CD4-positive, alpha-beta memory T cell (primary cell): ENCODE measurements at regions of chr1 and their contacts with region 1.

Region 1: GRCh38 chr1:151993654-151994496 is at the start of gene S100A10:
- DNase-seq: peak; percentile 83 to 87 (median 86)
- H3K4me3 ChIP-seq: peak within 1 kb of the TSS; percentile 55 to 88
- H3K4me3 Mint-ChIP-seq: peak within 1 kb of the TSS; percentile 95 to 99 (median 98)
- H3K27ac ChIP-seq: peak within 1 kb of the TSS; percentile 92
- H3K27ac Mint-ChIP-seq: peak within 1 kb of the TSS; percentile 97 to 99 (median 98)
- H3K4me1 ChIP-seq: peaks cover 54% of the 10 kb centered on the region
- H3K4me1 Mint-ChIP-seq: peaks cover 38 to 61% (median 46%) of the 10 kb centered on the region in 4 donors
- H3K27me3 ChIP-seq: no peaks in the 10 kb centered on the region
- H3K27me3 Mint-ChIP-seq: no peaks in the 10 kb centered on the region
- total RNA-seq, gene S100A10: 218 to 231 TPM

Region 2: DNA sequence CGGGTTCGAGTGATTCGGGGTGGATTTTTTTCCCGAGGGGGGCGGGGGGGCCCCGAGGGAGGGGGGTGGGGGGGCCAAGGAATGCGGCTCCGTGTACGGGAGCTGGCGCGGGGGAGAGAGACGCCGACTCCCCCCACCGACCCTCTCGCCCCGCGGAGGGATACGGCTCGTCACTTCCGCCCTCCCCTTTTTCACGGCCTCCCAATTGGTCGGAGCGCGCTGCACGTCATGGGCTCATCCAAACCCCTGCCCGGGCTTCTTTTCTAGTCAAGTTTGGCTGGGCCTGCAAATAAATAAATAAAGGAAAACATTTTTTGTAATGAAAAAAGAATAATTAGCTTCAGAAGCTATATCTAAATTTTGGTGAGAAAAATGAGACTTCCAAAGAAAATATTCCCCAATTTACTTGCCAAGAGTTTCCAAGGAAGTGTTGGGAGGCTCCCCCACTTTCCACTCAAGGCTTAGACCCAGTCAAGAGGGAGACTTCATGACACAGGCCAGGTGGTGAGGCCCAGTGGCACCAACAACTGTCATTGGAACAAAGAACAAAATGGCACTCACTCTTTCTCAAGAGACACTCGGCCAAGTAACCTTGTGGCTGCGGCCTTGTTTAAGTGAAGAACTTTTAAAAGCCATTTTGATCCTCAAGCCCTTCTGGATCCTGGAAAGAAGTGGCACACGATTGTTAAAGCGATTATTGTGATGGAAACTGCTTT is 534.4 kb before region 1 on chr1 and contains the start of gene POGZ:
- CTCF ChIA-PET with region 1: no interaction called
- POLR2A ChIA-PET with region 1: no interaction called
- intact Hi-C with region 1: loop called (anchors 1 kb)
- DNase-seq: peak; percentile 91 to 93 (median 92)
- H3K4me3 ChIP-seq: peak within 1 kb of the TSS; percentile 83 to 98
- H3K4me3 Mint-ChIP-seq: peak within 1 kb of the TSS; percentile 87 to 96 (median 92)
- H3K27ac ChIP-seq: peak within 1 kb of the TSS; percentile 75
- H3K27ac Mint-ChIP-seq: peak within 1 kb of the TSS; percentile 95 to 99 (median 96)
- H3K4me1 ChIP-seq: peaks cover 31% of the 10 kb centered on the region
- H3K4me1 Mint-ChIP-seq: peaks cover 11 to 35% (median 23%) of the 10 kb centered on the region in 4 donors
- H3K27me3 ChIP-seq: no peaks in the 10 kb centered on the region
- H3K27me3 Mint-ChIP-seq: peaks cover 17% of the 10 kb centered on the region in 2 donors
- total RNA-seq, gene POGZ: 125 to 130 TPM

Region 3: GRCh38 chr1:151594143-151594625 is 399.7 kb before region 1 on chr1:
- CTCF ChIA-PET with region 1: no interaction called
- POLR2A ChIA-PET with region 1: no interaction called
- intact Hi-C with region 1: loop called (anchors 1 kb)
- DNase-seq: peak; percentile 82 to 84 (median 83)
- H3K4me3 ChIP-seq: peak overlapping the region in 1 of 2 donors; percentile 33
- H3K4me3 Mint-ChIP-seq: peak overlapping the region in 7 of 8 donors; percentile 33 to 82 (median 70)
- H3K27ac ChIP-seq: no peak overlapping the region
- H3K27ac Mint-ChIP-seq: peak overlapping the region in 6 of 7 donors; percentile 4 to 49 (median 26)
- H3K4me1 ChIP-seq: peaks cover 5% of the 10 kb centered on the region
- H3K4me1 Mint-ChIP-seq: peaks cover 3 to 12% (median 9%) of the 10 kb centered on the region in 4 donors
- H3K27me3 ChIP-seq: no peaks in the 10 kb centered on the region
- H3K27me3 Mint-ChIP-seq: peaks cover 4 to 8% of the 10 kb centered on the region in 2 donors

Region 4: DNA sequence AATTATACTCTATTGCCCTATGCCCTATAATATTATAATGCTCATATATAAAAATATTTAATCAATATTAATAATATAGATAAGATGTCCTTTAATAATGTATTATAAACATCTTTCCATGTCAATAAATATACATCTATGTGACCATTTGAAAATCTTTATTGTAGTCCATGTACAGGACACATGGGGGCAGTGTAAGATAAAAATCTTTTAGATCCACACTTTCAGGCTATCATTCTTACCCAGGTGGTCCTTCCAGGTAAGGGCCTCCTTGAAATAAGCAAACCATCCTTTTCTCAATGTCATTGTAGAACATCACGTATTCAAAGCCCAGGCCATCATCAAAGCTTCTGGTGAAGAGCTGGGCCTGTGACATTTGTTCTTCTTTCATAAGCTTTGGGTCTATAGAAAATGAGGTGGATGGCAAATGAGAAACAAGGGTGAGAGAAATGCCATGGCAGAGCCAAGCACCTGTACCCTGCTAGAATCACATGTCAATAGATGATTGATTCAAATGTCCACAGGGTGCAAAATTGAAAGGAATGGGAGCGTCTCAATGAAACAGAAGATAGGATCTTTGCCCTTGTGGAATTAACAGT is 104.8 kb before region 1 on chr1:
- CTCF ChIA-PET with region 1: interaction called, 118 read pairs
- POLR2A ChIA-PET with region 1: interaction called, 4 read pairs
- intact Hi-C with region 1: loop called (anchors 1 kb)
- DNase-seq: peak in 4 of 5 donors; percentile 27 to 45 (median 34)
- H3K4me3 ChIP-seq: no peak overlapping the region
- H3K4me3 Mint-ChIP-seq: no peak overlapping the region
- H3K27ac ChIP-seq: no peak overlapping the region
- H3K27ac Mint-ChIP-seq: peak overlapping the region in 6 of 7 donors; percentile 18 to 84 (median 64)
- H3K4me1 ChIP-seq: peaks cover 21% of the 10 kb centered on the region
- H3K4me1 Mint-ChIP-seq: peaks cover 27 to 38% (median 33%) of the 10 kb centered on the region in 4 donors
- H3K27me3 ChIP-seq: no peaks in the 10 kb centered on the region
- H3K27me3 Mint-ChIP-seq: no peaks in the 10 kb centered on the region

Region 5: DNA sequence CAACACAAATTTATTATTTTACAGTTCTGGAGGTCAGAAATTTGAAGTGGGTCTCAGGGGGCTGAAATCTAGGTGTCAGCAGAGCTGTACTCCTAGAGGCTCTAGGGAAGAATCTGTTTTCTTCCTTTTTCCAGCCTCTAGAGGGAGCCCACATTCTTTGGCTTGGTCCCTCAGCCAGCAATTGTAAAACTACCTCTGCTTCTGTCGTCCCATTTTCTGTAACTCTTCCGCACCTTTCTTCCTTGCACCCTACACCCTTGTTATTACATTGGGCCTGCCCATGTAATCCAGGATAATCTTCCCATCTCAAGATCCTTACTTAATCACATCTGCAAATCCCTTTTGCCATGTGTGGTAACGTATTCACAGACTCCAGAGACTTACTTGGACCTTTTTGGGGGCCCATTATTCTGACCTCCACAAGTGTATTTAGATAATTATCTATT is 59.8 kb before region 1 on chr1:
- CTCF ChIA-PET with region 1: interaction called, 340 read pairs
- POLR2A ChIA-PET with region 1: interaction called, 5 read pairs
- intact Hi-C with region 1: loop called (anchors 1 kb)
- DNase-seq: peak; percentile 52 to 75 (median 69)
- H3K4me3 ChIP-seq: no peak overlapping the region
- H3K4me3 Mint-ChIP-seq: peak overlapping the region in 1 of 8 donors; percentile 4
- H3K27ac ChIP-seq: no peak overlapping the region
- H3K27ac Mint-ChIP-seq: peak overlapping the region in 5 of 7 donors; percentile 31 to 91 (median 65)
- H3K4me1 ChIP-seq: no peaks in the 10 kb centered on the region
- H3K4me1 Mint-ChIP-seq: peaks cover 4 to 6% (median 4%) of the 10 kb centered on the region in 4 donors
- H3K27me3 ChIP-seq: no peaks in the 10 kb centered on the region
- H3K27me3 Mint-ChIP-seq: peaks cover 0 to 4% of the 10 kb centered on the region in 2 donors

Region 6: GRCh38 chr1:151968058-151968457 is 25.8 kb before region 1 on chr1:
- CTCF ChIA-PET with region 1: interaction called, 270 read pairs
- POLR2A ChIA-PET with region 1: interaction called, 25 read pairs
- intact Hi-C with region 1: loop called (anchors 1 kb)
- DNase-seq: peak; percentile 60 to 75 (median 73)
- H3K4me3 ChIP-seq: no peak overlapping the region
- H3K4me3 Mint-ChIP-seq: peak overlapping the region in 1 of 8 donors; percentile 42
- H3K27ac ChIP-seq: no peak overlapping the region
- H3K27ac Mint-ChIP-seq: peak overlapping the region in 2 of 7 donors; percentile 65 to 68
- H3K4me1 ChIP-seq: peaks cover 9% of the 10 kb centered on the region
- H3K4me1 Mint-ChIP-seq: peaks cover 8 to 26% (median 13%) of the 10 kb centered on the region in 4 donors
- H3K27me3 ChIP-seq: no peaks in the 10 kb centered on the region
- H3K27me3 Mint-ChIP-seq: peaks cover 0 to 3% of the 10 kb centered on the region in 2 donors

Region 7: DNA sequence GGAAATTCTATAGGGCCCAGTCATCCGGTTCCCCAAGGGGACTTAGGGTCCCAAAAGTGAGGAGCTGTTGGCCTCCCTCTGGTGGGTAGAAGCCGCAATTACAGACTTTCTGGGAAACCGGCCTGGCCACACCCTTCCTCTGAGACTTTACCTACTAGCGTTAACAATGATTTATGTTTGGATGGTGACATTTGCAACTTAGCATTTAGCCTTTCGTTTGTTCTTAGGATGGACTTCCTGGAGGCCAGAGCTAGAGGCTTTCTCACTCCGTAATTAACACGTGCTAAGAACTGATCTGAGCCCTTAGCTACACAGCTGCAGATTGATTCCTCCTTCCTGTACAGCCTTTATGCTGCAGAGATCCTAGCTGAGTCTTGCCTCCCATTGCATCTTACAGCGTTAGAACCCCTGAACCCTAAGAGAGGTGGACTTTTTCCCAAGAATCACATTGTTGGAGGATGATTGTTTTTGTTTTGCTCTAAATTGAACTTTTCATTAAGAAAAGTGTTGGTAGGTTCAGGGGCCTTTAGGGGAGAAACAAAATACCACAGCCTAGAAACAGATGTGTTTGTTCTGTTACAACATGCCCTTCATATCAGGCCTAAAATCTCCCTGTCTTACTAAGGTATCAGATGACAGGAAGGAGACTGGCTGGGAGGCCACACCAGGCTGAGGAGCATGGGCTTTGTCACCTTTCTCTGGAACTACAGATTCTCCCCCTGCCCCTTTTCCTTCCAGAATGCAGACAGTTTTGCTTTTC is 41.0 kb after region 1 on chr1:
- CTCF ChIA-PET with region 1: no interaction called
- POLR2A ChIA-PET with region 1: interaction called, 14 read pairs
- intact Hi-C with region 1: loop called (anchors 2 kb)
- DNase-seq: peak; percentile 75 to 87 (median 80)
- H3K4me3 ChIP-seq: peak overlapping the region; percentile 73 to 77
- H3K4me3 Mint-ChIP-seq: peak overlapping the region; percentile 91 to 100 (median 100)
- H3K27ac ChIP-seq: peak overlapping the region; percentile 88
- H3K27ac Mint-ChIP-seq: peak overlapping the region; percentile 97 to 100 (median 99)
- H3K4me1 ChIP-seq: peaks cover 38% of the 10 kb centered on the region
- H3K4me1 Mint-ChIP-seq: peaks cover 23 to 54% (median 43%) of the 10 kb centered on the region in 4 donors
- H3K27me3 ChIP-seq: no peaks in the 10 kb centered on the region
- H3K27me3 Mint-ChIP-seq: no peaks in the 10 kb centered on the region